CD4-positive, alpha-beta T cell (primary cell): ENCODE measurements at regions of chr6 and their contacts with region 1.

Region 1: GRCh38 chr6:130215526-130215925 is 7.2 kb downstream of the SAMD3 start:
- DNase-seq: peak in 7 of 14 experiments; percentile 19 to 92 (median 43)
- ATAC-seq: peak; percentile 95
- H3K4me3 ChIP-seq: peak overlapping the region; percentile 54
- H3K4me3 Mint-ChIP-seq: peak overlapping the region; percentile 87
- H3K27ac ChIP-seq: peak overlapping the region in 1 of 2 donors; percentile 1
- H3K27ac Mint-ChIP-seq: peak overlapping the region; percentile 67
- H3K4me1 ChIP-seq: peaks cover 22% of the 10 kb centered on the region
- H3K4me1 Mint-ChIP-seq: peaks cover 84% of the 10 kb centered on the region
- H3K27me3 ChIP-seq: no peaks in the 10 kb centered on the region
- H3K27me3 Mint-ChIP-seq: no peaks in the 10 kb centered on the region
- CTCF ChIP-seq: no peak

Region 2: DNA sequence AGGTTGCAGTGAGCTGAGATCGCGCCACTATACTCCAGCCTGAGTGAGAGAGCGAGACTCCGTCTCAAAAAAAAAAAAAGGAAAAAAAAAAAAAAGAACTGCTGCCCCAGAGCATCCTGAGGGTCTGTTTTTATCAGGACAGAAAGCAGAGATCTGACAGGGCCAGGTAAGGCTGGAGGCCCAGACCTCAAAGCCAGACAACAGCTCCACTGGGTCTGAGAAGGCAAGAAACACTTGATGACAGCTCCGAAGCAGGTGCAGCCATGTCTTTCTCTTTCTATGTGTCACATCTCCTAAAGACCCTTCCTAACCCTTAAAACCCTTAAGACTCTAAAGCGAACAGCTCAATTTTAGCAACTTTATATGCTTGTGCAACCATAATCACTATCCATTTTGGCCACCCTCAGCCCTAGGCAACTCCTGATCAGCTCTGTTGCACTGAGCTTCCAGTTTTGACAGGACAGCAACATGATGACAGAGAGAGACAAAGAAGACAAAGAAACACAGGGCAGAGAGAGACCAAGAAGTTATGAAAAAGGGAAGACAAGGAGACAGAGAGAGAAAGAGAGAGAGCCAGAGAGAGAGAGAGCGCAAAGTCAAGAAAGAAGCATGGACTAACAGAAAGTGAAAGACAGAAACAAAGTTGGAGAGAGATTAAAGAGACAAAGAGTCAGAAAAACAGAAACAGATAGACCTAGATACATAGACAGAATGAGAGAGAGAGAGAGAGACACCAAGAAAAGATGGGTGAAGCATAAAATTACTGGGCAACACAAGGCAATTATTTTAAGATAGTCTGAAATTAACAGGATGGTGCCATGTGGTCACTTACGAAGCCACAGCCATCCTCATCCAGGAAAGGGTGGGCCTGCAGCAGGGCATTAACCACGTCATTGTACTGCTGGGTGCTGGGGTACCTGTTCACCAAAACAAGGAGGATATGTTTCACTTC is 32.0 kb before region 1 on chr6:
- CTCF ChIA-PET with region 1: no interaction called
- POLR2A ChIA-PET with region 1: interaction called, 4 read pairs
- intact Hi-C with region 1: loop called in 1 of 2 experiments (anchors 5 kb)
- DNase-seq: peak in 8 of 14 experiments; percentile 2 to 87 (median 48)
- ATAC-seq: peak; percentile 94
- H3K4me3 ChIP-seq: peak overlapping the region; percentile 11
- H3K4me3 Mint-ChIP-seq: peak overlapping the region; percentile 28
- H3K27ac ChIP-seq: peak overlapping the region; percentile 33 to 67
- H3K27ac Mint-ChIP-seq: peak overlapping the region; percentile 85
- H3K4me1 ChIP-seq: peaks cover 24% of the 10 kb centered on the region
- H3K4me1 Mint-ChIP-seq: peaks cover 62% of the 10 kb centered on the region
- H3K27me3 ChIP-seq: no peaks in the 10 kb centered on the region
- H3K27me3 Mint-ChIP-seq: no peaks in the 10 kb centered on the region
- CTCF ChIP-seq: no peak

Region 3: GRCh38 chr6:130202782-130203181 is 12.7 kb before region 1 on chr6:
- CTCF ChIA-PET with region 1: no interaction called
- POLR2A ChIA-PET with region 1: interaction called, 12 read pairs
- intact Hi-C with region 1: no loop called
- DNase-seq: peak in 2 of 14 experiments; percentile 13 to 39
- ATAC-seq: peak; percentile 51
- H3K4me3 ChIP-seq: no peak overlapping the region
- H3K4me3 Mint-ChIP-seq: peak overlapping the region; percentile 22
- H3K27ac ChIP-seq: no peak overlapping the region
- H3K27ac Mint-ChIP-seq: peak overlapping the region; percentile 52
- H3K4me1 ChIP-seq: peaks cover 32% of the 10 kb centered on the region
- H3K4me1 Mint-ChIP-seq: peaks cover 68% of the 10 kb centered on the region
- H3K27me3 ChIP-seq: no peaks in the 10 kb centered on the region
- H3K27me3 Mint-ChIP-seq: no peaks in the 10 kb centered on the region
- CTCF ChIP-seq: no peak